CD8-positive, alpha-beta T cell (primary cell): ENCODE measurements at regions of chr7 and their contacts with region 1.

Region 1: GRCh38 chr7:36686499-36686898 is 37.8 kb downstream of the AOAH start:
- DNase-seq: peak in 8 of 9 experiments; percentile 19 to 75 (median 58)
- ATAC-seq: peak; percentile 92
- H3K4me3 ChIP-seq: no peak overlapping the region
- H3K4me3 Mint-ChIP-seq: peak overlapping the region; percentile 5
- H3K27ac ChIP-seq: peak overlapping the region in 1 of 2 experiments; percentile 47
- H3K27ac Mint-ChIP-seq: peak overlapping the region; percentile 81
- H3K4me1 ChIP-seq: peaks cover 27% of the 10 kb centered on the region
- H3K4me1 Mint-ChIP-seq: peaks cover 77% of the 10 kb centered on the region
- H3K27me3 ChIP-seq: no peaks in the 10 kb centered on the region
- H3K27me3 Mint-ChIP-seq: no peaks in the 10 kb centered on the region
- CTCF ChIP-seq: no peak

Region 2: GRCh38 chr7:35805876-35806275 is 880.6 kb before region 1 on chr7:
- CTCF ChIA-PET with region 1: no interaction called
- POLR2A ChIA-PET with region 1: no interaction called
- intact Hi-C with region 1: no loop called
- DNase-seq: peak in 2 of 9 experiments; percentile 29 to 50
- ATAC-seq: no peak
- H3K4me3 ChIP-seq: no peak overlapping the region
- H3K4me3 Mint-ChIP-seq: peak overlapping the region; percentile 20
- H3K27ac ChIP-seq: peak overlapping the region in 1 of 2 experiments; percentile 62
- H3K27ac Mint-ChIP-seq: peak overlapping the region; percentile 90
- H3K4me1 ChIP-seq: peaks cover 66% of the 10 kb centered on the region
- H3K4me1 Mint-ChIP-seq: peaks cover 71% of the 10 kb centered on the region
- H3K27me3 ChIP-seq: no peaks in the 10 kb centered on the region
- H3K27me3 Mint-ChIP-seq: no peaks in the 10 kb centered on the region
- CTCF ChIP-seq: no peak

Region 3: DNA sequence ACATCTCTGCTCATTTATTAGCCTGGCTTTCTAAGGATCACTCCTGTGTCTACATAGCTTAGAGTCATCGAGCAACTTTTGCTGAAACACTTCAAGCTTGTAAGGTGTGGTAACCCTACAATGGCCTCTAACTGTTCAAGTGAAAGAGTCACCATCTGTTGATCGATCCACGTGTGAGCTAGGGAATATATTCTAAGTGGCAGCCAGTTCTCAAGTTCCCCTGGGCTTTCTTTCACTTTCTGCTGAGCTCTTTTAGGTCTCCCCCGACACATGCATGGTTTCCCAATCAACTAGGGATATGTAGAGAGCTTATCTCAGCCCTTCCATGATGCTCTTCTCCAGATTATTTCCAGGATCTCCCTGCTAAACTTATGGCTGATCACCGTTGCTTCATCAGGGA is 22.3 kb after region 1 on chr7:
- CTCF ChIA-PET with region 1: no interaction called
- POLR2A ChIA-PET with region 1: no interaction called
- intact Hi-C with region 1: no loop called
- DNase-seq: peak in 1 of 9 experiments; percentile 57
- ATAC-seq: no peak
- H3K4me3 ChIP-seq: peak overlapping the region in 1 of 2 experiments; percentile 10
- H3K4me3 Mint-ChIP-seq: no peak overlapping the region
- H3K27ac ChIP-seq: peak overlapping the region in 1 of 2 experiments; percentile 41
- H3K27ac Mint-ChIP-seq: peak overlapping the region; percentile 60
- H3K4me1 ChIP-seq: peaks cover 7% of the 10 kb centered on the region
- H3K4me1 Mint-ChIP-seq: peaks cover 63% of the 10 kb centered on the region
- H3K27me3 ChIP-seq: no peaks in the 10 kb centered on the region
- H3K27me3 Mint-ChIP-seq: no peaks in the 10 kb centered on the region
- CTCF ChIP-seq: no peak

Region 4: GRCh38 chr7:36784991-36785940 is 98.8 kb after region 1 on chr7:
- CTCF ChIA-PET with region 1: no interaction called
- POLR2A ChIA-PET with region 1: no interaction called
- intact Hi-C with region 1: loop called in 1 of 2 experiments (anchors 5 kb)
- DNase-seq: peak; percentile 55 to 97 (median 76)
- ATAC-seq: peak; percentile 76
- H3K4me3 ChIP-seq: peak overlapping the region in 1 of 2 experiments; percentile 5
- H3K4me3 Mint-ChIP-seq: peak overlapping the region; percentile 46
- H3K27ac ChIP-seq: peak overlapping the region; percentile 67 to 87
- H3K27ac Mint-ChIP-seq: peak overlapping the region; percentile 99
- H3K4me1 ChIP-seq: peaks cover 84% of the 10 kb centered on the region
- H3K4me1 Mint-ChIP-seq: peaks cover 89% of the 10 kb centered on the region
- H3K27me3 ChIP-seq: no peaks in the 10 kb centered on the region
- H3K27me3 Mint-ChIP-seq: no peaks in the 10 kb centered on the region
- CTCF ChIP-seq: no peak

Region 5: DNA sequence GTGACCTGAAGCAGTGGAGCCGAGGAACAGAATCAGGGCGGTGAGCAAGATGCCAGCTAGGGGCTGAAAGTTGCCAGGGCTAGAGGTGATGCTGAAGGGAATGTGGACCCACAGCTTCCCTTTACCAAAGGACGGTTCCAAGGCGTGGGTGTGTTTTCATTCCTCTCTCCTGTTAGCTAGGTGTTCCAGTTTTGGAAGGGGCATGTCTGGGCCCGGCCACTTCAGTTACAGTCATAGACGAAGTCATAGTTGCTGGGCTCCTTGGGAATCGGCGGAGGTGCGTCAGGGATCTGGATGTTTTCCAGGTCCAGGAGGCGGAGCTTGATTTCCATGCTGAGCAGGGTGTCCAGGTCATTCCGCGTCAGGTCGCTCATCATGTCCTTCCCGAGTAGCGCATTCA is 168.8 kb after region 1 on chr7:
- CTCF ChIA-PET with region 1: no interaction called
- POLR2A ChIA-PET with region 1: no interaction called
- intact Hi-C with region 1: loop called in 1 of 2 experiments (anchors 5 kb)
- DNase-seq: no peak
- ATAC-seq: no peak
- H3K4me3 ChIP-seq: no peak overlapping the region
- H3K4me3 Mint-ChIP-seq: no peak overlapping the region
- H3K27ac ChIP-seq: no peak overlapping the region
- H3K27ac Mint-ChIP-seq: no peak overlapping the region
- H3K4me1 ChIP-seq: no peaks in the 10 kb centered on the region
- H3K4me1 Mint-ChIP-seq: peaks cover 15% of the 10 kb centered on the region
- H3K27me3 ChIP-seq: no peaks in the 10 kb centered on the region
- H3K27me3 Mint-ChIP-seq: no peaks in the 10 kb centered on the region
- CTCF ChIP-seq: no peak

Region 6: GRCh38 chr7:36871863-36872262 is 185.4 kb after region 1 on chr7:
- CTCF ChIA-PET with region 1: no interaction called
- POLR2A ChIA-PET with region 1: no interaction called
- intact Hi-C with region 1: loop called (anchors 5 kb)
- DNase-seq: peak in 2 of 9 experiments; percentile 24 to 43
- ATAC-seq: peak; percentile 51
- H3K4me3 ChIP-seq: no peak overlapping the region
- H3K4me3 Mint-ChIP-seq: no peak overlapping the region
- H3K27ac ChIP-seq: no peak overlapping the region
- H3K27ac Mint-ChIP-seq: no peak overlapping the region
- H3K4me1 ChIP-seq: no peaks in the 10 kb centered on the region
- H3K4me1 Mint-ChIP-seq: peaks cover 12% of the 10 kb centered on the region
- H3K27me3 ChIP-seq: no peaks in the 10 kb centered on the region
- H3K27me3 Mint-ChIP-seq: no peaks in the 10 kb centered on the region
- CTCF ChIP-seq: no peak

Region 7: GRCh38 chr7:36986429-36987362 is 300.2 kb after region 1 on chr7:
- CTCF ChIA-PET with region 1: no interaction called
- POLR2A ChIA-PET with region 1: no interaction called
- intact Hi-C with region 1: loop called in 1 of 2 experiments (anchors 5 kb)
- DNase-seq: peak; percentile 28 to 72 (median 60)
- ATAC-seq: peak; percentile 71
- H3K4me3 ChIP-seq: no peak overlapping the region
- H3K4me3 Mint-ChIP-seq: no peak overlapping the region
- H3K27ac ChIP-seq: no peak overlapping the region
- H3K27ac Mint-ChIP-seq: no peak overlapping the region
- H3K4me1 ChIP-seq: no peaks in the 10 kb centered on the region
- H3K4me1 Mint-ChIP-seq: peaks cover 46% of the 10 kb centered on the region
- H3K27me3 ChIP-seq: no peaks in the 10 kb centered on the region
- H3K27me3 Mint-ChIP-seq: no peaks in the 10 kb centered on the region
- CTCF ChIP-seq: peak; percentile 79